Activated naive CD4-positive, alpha-beta T cell treated with anti-CD3 and anti-CD28 coated beads for 36 hours (primary cell): ENCODE measurements at regions of chr11 and their contacts with region 1.

Region 1: GRCh38 chr11:113532697-113533424 is 57.7 kb upstream of the DRD2 start:
- DNase-seq: peak; percentile 76
- H3K4me3 Mint-ChIP-seq: no peak overlapping the region
- H3K27ac Mint-ChIP-seq: no peak overlapping the region
- H3K4me1 Mint-ChIP-seq: no peaks in the 10 kb centered on the region
- H3K27me3 Mint-ChIP-seq: peaks cover 20% of the 10 kb centered on the region

Region 2: GRCh38 chr11:112219476-112220232 is 1313.2 kb before region 1 on chr11:
- CTCF ChIA-PET with region 1: interaction called, 3 read pairs
- intact Hi-C with region 1: loop called (anchors 1 kb)
- DNase-seq: peak; percentile 48
- H3K4me3 Mint-ChIP-seq: no peak overlapping the region
- H3K27ac Mint-ChIP-seq: no peak overlapping the region
- H3K4me1 Mint-ChIP-seq: no peaks in the 10 kb centered on the region
- H3K27me3 Mint-ChIP-seq: no peaks in the 10 kb centered on the region

Region 3: GRCh38 chr11:113796663-113797259 is 263.9 kb after region 1 on chr11:
- CTCF ChIA-PET with region 1: no interaction called
- intact Hi-C with region 1: loop called (anchors 5 kb)
- DNase-seq: no peak
- H3K4me3 Mint-ChIP-seq: no peak overlapping the region
- H3K27ac Mint-ChIP-seq: no peak overlapping the region
- H3K4me1 Mint-ChIP-seq: no peaks in the 10 kb centered on the region
- H3K27me3 Mint-ChIP-seq: no peaks in the 10 kb centered on the region